PC-3 (cell line): ENCODE measurements at regions of chr18 and their contacts with region 1.

Region 1: DNA sequence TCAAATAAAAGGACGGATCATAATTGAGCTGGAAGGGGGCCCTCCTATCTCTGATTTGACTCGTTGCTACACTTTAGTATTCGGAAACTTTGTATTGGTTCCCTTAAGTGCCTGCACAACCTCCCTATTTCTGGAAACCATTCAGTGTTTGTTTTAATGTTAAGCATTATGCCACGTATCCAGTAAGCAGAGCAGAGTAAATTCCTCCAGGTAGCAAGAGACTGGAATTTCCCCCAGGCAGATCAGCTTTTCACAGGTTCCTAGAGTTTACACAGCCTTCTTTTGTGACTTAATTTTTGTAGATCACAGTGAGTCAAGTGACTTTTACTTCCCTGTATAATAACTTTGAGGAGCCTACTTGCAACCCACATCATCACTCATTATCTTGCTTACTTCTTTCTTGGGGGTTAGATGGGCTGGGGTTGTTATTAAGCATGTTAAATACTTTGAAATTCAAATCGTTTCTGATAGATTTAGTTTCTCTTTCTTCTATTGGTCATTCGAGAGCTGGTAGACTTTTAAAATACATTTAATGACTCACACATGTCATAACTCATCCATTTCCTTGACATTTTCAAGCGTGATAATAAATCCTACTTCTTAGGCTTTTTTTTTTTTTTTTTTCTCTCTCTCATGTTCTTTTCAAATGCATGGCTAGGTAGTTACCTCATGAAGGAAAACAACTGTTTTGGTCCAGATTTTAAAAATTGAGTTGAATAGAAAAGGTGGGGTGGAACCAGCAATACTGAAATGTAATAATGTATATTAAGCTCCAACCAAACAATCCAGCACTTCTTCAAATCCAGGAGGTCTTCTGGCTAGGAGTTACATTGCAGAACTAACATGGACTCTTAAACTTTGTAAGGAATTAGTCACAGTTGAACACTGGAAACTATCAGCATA is 219.3 kb downstream of the NEDD4L start:
- DNase-seq: peak; percentile 85
- ATAC-seq: peak; percentile 87
- H3K4me3 ChIP-seq: peak overlapping the region; percentile 56
- H3K27ac ChIP-seq: peak overlapping the region; percentile 85
- H3K4me1 ChIP-seq: peaks cover 54% of the 10 kb centered on the region
- H3K27me3 ChIP-seq: no peaks in the 10 kb centered on the region
- CTCF ChIP-seq: no peak

Region 2: DNA sequence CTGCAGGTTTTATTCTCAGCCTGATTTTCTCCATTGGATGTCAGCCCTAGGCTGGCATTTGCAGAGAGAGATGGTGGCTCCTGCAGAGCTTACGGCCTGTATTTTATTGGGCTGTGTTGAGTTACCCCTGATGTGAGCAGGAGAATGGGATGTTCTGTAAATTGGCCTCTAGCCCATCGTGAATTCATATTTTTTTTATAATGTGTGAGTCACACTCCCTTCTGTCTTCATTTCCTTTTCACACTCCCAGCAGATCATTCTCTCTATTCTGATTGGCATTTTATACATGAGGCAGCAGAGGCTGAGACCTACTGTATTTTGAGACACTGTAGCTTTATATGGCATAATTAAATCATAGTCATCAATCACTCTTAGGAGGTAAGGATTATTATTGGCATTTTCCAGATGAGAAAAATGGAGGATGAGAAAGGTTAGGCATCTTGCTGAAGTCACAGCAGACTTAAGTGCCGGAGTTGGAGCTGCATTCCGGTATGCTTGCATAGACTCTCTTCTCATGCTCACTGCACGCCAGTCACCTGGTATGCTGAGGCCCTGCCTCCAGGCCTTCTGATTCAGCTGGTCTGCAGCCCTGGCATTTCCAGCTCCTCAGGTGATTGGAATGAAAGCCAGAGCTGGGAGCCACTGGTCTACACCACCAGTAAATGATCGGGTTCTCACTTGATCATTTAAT is 76.9 kb before region 1 on chr18:
- CTCF ChIA-PET with region 1: no interaction called
- POLR2A ChIA-PET with region 1: no interaction called
- intact Hi-C with region 1: loop called (anchors 5 kb)
- DNase-seq: peak; percentile 89
- ATAC-seq: peak; percentile 88
- H3K4me3 ChIP-seq: peak overlapping the region; percentile 16; the same call in 1 of the 2 replicates
- H3K27ac ChIP-seq: peak overlapping the region; percentile 80
- H3K4me1 ChIP-seq: peaks cover 56% of the 10 kb centered on the region
- H3K27me3 ChIP-seq: no peaks in the 10 kb centered on the region
- CTCF ChIP-seq: no peak

Region 3: GRCh38 chr18:58208207-58208932 is 54.9 kb before region 1 on chr18:
- CTCF ChIA-PET with region 1: no interaction called
- POLR2A ChIA-PET with region 1: interaction called, 12 read pairs
- intact Hi-C with region 1: no loop called
- DNase-seq: peak; percentile 42
- ATAC-seq: peak; percentile 67
- H3K4me3 ChIP-seq: no peak overlapping the region
- H3K27ac ChIP-seq: peak overlapping the region; percentile 64
- H3K4me1 ChIP-seq: peaks cover 42% of the 10 kb centered on the region
- H3K27me3 ChIP-seq: no peaks in the 10 kb centered on the region
- CTCF ChIP-seq: no peak